HCT116 (cell line): ENCODE measurements at regions of chr2 and their contacts with region 1.

Region 1: DNA sequence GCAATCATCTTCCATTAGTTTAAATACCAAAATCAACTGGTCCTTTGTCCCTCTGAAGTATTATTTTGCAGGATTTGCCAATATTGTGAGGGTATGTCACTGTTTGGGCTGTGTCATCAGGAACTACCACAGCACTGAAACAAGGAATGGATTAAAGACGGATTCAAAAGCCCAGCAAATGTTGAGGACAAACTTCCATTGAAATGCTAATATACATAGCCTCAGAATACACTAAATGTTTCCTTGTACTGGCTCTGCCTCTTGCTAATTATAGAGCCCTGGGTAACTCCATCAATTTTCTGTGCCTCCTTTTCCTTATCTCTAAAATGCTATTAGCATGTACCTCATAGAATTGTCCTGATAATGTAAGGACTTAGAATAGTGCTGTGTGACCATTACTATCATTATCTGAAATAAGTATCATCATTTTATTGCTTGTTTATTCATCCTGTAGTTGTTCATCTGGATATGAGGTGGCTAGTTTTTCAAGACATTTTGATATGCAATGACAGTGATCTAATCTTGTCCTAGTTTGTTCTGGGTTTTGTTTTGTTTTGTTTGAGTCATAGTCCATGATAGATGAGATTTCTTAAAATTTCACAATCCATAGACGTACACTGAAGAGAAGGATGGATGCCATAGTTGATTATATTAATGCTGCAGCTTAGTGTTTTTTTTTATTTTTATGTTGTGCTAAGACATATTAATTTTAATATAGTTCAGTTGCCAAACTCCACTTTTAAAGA is 333.4 kb upstream of the KCNH7 start:
- DNase-seq: no peak
- ATAC-seq: no peak
- H3K4me3 ChIP-seq: no peak overlapping the region
- H3K27ac ChIP-seq: no peak overlapping the region
- H3K4me1 ChIP-seq: no peaks in the 10 kb centered on the region
- H3K27me3 ChIP-seq: peaks cover 25% of the 10 kb centered on the region
- CTCF ChIP-seq: no peak
- POLR2A ChIP-seq: no peak
- RAD21 ChIP-seq: no peak

Region 2: DNA sequence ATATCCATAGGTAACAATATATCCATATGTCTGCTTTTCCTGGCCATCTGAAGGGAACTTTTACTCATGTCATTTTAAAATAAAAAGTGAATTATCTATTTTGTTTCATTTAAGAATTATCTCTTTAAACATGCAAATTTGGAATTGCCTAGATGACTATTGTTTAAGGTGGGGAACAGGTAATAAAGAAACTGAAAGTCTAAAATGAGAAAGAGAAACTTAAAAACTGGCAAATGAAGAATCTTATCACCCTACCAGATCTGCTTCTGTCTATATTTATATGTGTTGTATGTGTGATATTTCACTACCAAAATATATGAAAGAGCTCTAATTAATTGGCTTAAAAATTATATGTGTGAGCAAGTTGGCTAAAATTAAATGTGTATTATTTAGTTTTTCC is 90.2 kb before region 1 on chr2:
- CTCF ChIA-PET with region 1: no interaction called
- POLR2A ChIA-PET with region 1: no interaction called
- RAD21 ChIA-PET with region 1: no interaction called
- intact Hi-C with region 1: no loop called
- DNase-seq: no peak
- ATAC-seq: no peak
- H3K4me3 ChIP-seq: no peak overlapping the region
- H3K27ac ChIP-seq: no peak overlapping the region
- H3K4me1 ChIP-seq: no peaks in the 10 kb centered on the region
- H3K27me3 ChIP-seq: peaks cover 4% of the 10 kb centered on the region
- CTCF ChIP-seq: no peak
- POLR2A ChIP-seq: no peak
- RAD21 ChIP-seq: no peak

Region 3: DNA sequence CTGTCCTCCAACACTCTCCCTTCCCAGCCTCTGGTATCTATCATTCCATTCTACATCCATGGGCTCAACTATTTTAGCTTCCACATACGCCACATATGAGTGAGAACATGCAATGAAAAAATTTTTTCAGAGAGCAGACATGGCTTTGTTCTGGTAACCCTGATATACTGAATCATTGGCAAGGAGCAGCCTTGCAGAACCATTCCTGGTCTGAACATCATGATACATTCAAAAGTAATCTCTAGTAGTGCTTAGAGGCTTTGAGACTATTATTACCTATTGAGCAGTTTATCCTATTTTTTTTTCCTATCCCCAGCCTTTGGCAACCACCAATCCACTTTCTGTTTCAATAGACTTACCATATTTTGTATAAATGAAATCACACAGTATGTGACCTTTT is 59.7 kb after region 1 on chr2:
- CTCF ChIA-PET with region 1: no interaction called
- POLR2A ChIA-PET with region 1: no interaction called
- RAD21 ChIA-PET with region 1: no interaction called
- intact Hi-C with region 1: no loop called
- DNase-seq: no peak
- ATAC-seq: no peak
- H3K4me3 ChIP-seq: no peak overlapping the region
- H3K27ac ChIP-seq: no peak overlapping the region
- H3K4me1 ChIP-seq: no peaks in the 10 kb centered on the region
- H3K27me3 ChIP-seq: no peaks in the 10 kb centered on the region
- CTCF ChIP-seq: no peak
- POLR2A ChIP-seq: no peak
- RAD21 ChIP-seq: no peak

Region 4: GRCh38 chr2:164479460-164479859 is 1307.5 kb after region 1 on chr2:
- CTCF ChIA-PET with region 1: interaction called, 13 read pairs
- POLR2A ChIA-PET with region 1: no interaction called
- RAD21 ChIA-PET with region 1: no interaction called
- intact Hi-C with region 1: no loop called
- DNase-seq: peak; percentile 27
- ATAC-seq: no peak
- H3K4me3 ChIP-seq: no peak overlapping the region
- H3K27ac ChIP-seq: no peak overlapping the region
- H3K4me1 ChIP-seq: no peaks in the 10 kb centered on the region
- H3K27me3 ChIP-seq: peaks cover 23% of the 10 kb centered on the region
- CTCF ChIP-seq: peak; percentile 24 to 53 (median 26); a peak in 4 of 6 replicates
- POLR2A ChIP-seq: no peak
- RAD21 ChIP-seq: peak; percentile 60